ENCODE measurements at regions of chr7 and their contacts with region 1.

Region 1: GRCh38 chr7:143416565-143417149 is 8.0 kb upstream of the EPHA1 start:
- DNase-seq: peak; percentile 48
- ATAC-seq: peak; percentile 74
- H3K4me3 ChIP-seq: no peak overlapping the region
- H3K27ac ChIP-seq: no peak overlapping the region
- H3K4me1 ChIP-seq: peaks cover 9% of the 10 kb centered on the region
- H3K27me3 ChIP-seq: peaks cover 2 to 14% of the 10 kb centered on the region in 2 experiments; a peak in 3 of 5 replicates
- CTCF ChIP-seq: peak; percentile 69
- EP300 ChIP-seq: no peak
- POLR2A ChIP-seq: no peak
- RAD21 ChIP-seq: peak; percentile 53; the same call in 1 of the 2 replicates

Region 2: DNA sequence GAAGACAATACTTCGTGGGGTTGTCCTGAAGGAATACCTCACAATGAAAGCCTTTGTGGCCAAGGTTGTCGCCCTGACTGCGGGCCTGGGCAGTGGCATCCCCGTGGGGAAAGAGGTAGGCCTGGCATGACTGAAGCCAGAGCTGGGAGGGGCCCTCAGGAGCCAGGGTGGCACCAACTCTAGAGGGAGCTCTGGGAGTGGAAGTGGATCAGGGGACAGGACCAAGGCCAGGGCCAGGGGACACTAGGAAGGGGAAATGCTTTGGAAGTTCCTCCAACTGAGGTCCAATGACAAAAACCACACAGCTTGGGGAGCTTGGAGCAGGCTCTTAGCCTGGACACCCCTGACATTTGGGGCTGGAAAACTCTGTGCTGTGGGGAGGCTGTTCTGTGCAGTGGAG is 94.9 kb before region 1 on chr7:
- CTCF ChIA-PET with region 1: no interaction called
- POLR2A ChIA-PET with region 1: no interaction called
- in situ Hi-C with region 1: loop called (anchors 5 kb)
- intact Hi-C with region 1: loop called (anchors 1 kb)
- DNase-seq: no peak
- ATAC-seq: peak; percentile 48
- H3K4me3 ChIP-seq: no peak overlapping the region
- H3K27ac ChIP-seq: no peak overlapping the region
- H3K4me1 ChIP-seq: peaks cover 31% of the 10 kb centered on the region
- H3K27me3 ChIP-seq: peaks cover 0 to 7% of the 10 kb centered on the region in 2 experiments; a peak in 2 of 5 replicates
- CTCF ChIP-seq: peak; percentile 49
- EP300 ChIP-seq: no peak
- POLR2A ChIP-seq: no peak
- RAD21 ChIP-seq: no peak